ENCODE measurements at regions of chr6 and their contacts with region 1.

Region 1: GRCh38 chr6:152982768-152983636 is at the start of gene FBXO5:
- H3K4me3 ChIP-seq: peak within 1 kb of the TSS; percentile 100
- H3K27ac ChIP-seq: peak within 1 kb of the TSS; percentile 96
- H3K4me1 ChIP-seq: peaks cover 3% of the 10 kb centered on the region; the same call in 1 of the 2 replicates
- CTCF ChIP-seq: peak; percentile 38; the same call in 1 of the 2 replicates

Region 2: GRCh38 chr6:152993431-152993830 is 10.4 kb after region 1 on chr6:
- CTCF ChIA-PET with region 1: interaction called, 3 read pairs
- POLR2A ChIA-PET with region 1: interaction called, 25 read pairs
- H3K4me3 ChIP-seq: no peak overlapping the region
- H3K27ac ChIP-seq: no peak overlapping the region
- H3K4me1 ChIP-seq: no peaks in the 10 kb centered on the region
- CTCF ChIP-seq: no peak

Region 3: DNA sequence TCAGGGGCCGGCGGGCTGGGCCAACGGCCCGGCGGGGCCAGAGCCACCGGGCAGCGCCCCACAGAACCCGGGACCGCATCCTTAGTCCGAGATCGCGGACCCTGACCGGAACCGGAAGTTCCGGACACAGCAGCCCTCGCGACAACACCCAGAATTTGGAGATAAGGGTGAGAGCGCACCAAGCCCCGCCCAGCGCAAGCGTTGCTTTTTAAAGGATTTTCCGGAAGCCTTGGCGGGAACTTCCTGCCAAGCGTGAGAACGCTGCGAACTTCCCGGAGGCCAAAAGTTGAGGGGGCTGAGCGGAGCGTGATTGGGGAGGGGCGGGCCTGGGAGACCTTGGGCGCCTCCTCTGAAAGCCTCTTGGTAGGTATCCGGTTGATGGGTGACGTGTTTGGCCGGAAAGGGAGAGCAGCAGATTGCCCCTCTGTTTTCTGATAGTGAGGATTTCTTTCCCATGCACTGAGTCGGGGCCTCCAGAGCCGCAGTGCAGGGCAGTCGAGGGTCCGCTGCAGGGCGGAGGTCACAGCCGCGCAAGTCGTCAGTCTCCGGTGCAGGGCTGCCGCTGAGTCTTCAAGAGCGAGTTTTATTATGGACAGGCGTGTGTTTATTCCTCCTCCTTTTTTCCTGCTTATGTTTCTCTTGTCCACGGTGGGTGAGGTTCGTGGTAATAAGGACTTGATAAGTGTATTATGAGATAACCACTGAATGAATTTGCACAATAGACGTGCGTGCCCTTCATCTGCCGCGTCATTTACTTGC is 19.8 kb after region 1 on chr6 and contains the start of gene MTRF1L:
- CTCF ChIA-PET with region 1: interaction called, 5 read pairs
- POLR2A ChIA-PET with region 1: interaction called, 55 read pairs
- H3K4me3 ChIP-seq: peak within 1 kb of the TSS; percentile 83
- H3K27ac ChIP-seq: peak within 1 kb of the TSS; percentile 75
- H3K4me1 ChIP-seq: no peaks in the 10 kb centered on the region
- CTCF ChIP-seq: no peak

Region 4: DNA sequence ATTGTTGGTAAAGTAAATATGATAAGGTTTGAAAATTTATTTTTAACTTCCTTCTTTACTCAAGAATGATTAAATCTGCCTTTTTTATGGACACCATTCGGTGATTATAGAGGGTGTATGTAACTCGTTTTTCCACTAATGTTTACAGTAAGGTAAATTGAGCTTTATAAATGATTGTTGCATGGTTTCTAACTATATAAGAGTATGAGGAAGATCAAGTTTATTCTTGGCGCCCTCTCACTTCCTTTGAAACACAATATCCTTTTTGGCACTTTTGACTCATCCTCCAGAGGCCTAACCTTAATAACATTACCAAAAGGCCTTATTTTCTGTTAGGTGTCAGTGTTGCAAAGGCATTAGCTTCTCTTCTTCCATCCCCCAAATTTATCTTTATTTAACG is 61.3 kb after region 1 on chr6:
- CTCF ChIA-PET with region 1: no interaction called
- POLR2A ChIA-PET with region 1: no interaction called
- H3K4me3 ChIP-seq: no peak overlapping the region
- H3K27ac ChIP-seq: no peak overlapping the region
- H3K4me1 ChIP-seq: no peaks in the 10 kb centered on the region
- CTCF ChIP-seq: no peak

Measured in HEK293 (cell line).